ENCODE measurements at regions of chr13 and their contacts with region 1.

Region 1: DNA sequence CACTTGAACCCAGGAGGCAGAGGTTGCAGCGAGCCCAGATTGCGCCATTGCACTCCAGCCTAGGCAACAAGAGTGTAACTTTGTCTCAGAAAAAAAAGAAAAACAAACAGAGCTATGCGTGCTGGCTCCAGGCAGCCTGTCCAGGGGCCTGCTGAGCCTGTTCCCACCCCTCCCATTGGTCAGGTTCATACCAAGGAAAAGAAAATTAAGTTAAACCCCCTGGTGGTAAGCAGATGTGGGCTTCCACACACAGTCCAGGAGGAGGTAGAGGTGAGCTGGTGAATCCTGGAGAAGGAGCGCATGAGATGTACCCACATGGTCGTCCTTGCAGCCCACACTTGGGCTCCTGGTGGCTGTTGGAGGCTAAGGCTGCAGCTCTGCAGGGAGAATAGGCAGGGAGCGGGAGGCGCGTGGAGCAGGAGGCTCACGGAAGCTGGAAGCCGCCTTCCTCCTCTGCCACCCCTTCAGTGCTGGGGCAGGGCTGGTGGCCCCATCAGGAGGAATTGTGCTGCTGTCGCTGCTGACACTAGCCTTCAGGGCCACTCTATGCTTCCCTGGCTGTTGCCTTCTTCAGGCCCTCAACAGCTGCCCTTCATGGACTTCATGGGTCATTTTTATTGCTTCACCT is 10.5 kb upstream of the CHAMP1 start:
- DNase-seq: no peak
- ATAC-seq: peak; percentile 38; the same call in 1 of the 3 replicates
- H3K4me3 ChIP-seq: no peak overlapping the region
- H3K27ac ChIP-seq: no peak overlapping the region
- H3K4me1 ChIP-seq: peaks cover 0 to 4% of the 10 kb centered on the region in 2 experiments; a peak in 2 of 5 replicates
- H3K27me3 ChIP-seq: no peaks in the 10 kb centered on the region
- CTCF ChIP-seq: peak in 1 of 3 experiments; percentile 19; a peak in 1 of 6 replicates
- EP300 ChIP-seq: no peak
- POLR2A ChIP-seq: no peak
- RAD21 ChIP-seq: no peak

Region 2: GRCh38 chr13:114268344-114269280 is 35.2 kb before region 1 on chr13:
- CTCF ChIA-PET with region 1: no interaction called
- POLR2A ChIA-PET with region 1: no interaction called
- in situ Hi-C with region 1: no loop called
- intact Hi-C with region 1: loop called (anchors 1 kb)
- DNase-seq: no peak
- ATAC-seq: no peak; the same call in 2 of the 3 replicates
- H3K4me3 ChIP-seq: no peak overlapping the region
- H3K27ac ChIP-seq: no peak overlapping the region
- H3K4me1 ChIP-seq: no peaks in the 10 kb centered on the region
- H3K27me3 ChIP-seq: no peaks in the 10 kb centered on the region
- CTCF ChIP-seq: no peak
- EP300 ChIP-seq: no peak
- POLR2A ChIP-seq: no peak
- RAD21 ChIP-seq: no peak